ENCODE measurements at regions of chr3 and their contacts with region 1.

Region 1: GRCh38 chr3:30628901-30629590 is 22.6 kb downstream of the TGFBR2 start:
- DNase-seq: peak in 2 of 9 donors; percentile 53 to 55
- ATAC-seq: peak; percentile 51
- H3K4me3 ChIP-seq: peak overlapping the region; percentile 29
- H3K4me3 Mint-ChIP-seq: peak overlapping the region; percentile 53 to 88 (median 72)
- H3K27ac ChIP-seq: peak overlapping the region; percentile 68
- H3K27ac Mint-ChIP-seq: peak overlapping the region; percentile 84 to 98 (median 96)
- H3K4me1 ChIP-seq: peaks cover 81 to 97% of the 10 kb centered on the region in 2 donors
- H3K4me1 Mint-ChIP-seq: peaks cover 64 to 100% (median 93%) of the 10 kb centered on the region in 7 donors
- H3K27me3 ChIP-seq: no peaks in the 10 kb centered on the region
- H3K27me3 Mint-ChIP-seq: no peaks in the 10 kb centered on the region

Region 2: DNA sequence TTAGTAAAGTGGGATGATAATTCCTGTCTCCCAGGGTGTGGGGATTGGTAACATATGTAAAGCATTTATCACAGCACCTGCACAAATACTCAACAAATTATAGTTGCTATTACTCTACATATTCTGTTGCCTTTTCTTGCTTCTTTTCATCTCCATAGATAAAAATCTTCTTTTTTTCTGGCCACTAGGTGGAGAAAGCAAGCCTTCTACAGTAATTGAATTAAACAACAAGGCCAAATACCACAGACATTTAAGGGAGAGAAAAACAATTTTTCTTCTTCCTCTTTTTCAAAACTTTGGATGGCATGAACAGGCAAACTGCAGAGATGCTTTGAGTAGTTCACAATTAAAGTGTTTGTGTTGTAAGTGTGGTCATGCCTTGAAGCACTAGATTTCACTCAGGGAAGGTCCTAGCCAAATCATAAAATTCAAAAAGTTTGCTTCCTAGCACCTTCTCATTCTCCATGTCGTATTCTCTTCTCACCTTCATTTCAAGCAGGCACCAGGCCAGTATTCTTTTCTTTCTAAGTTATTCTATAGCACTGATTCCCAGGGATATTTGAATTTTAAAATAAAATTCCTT is 516.1 kb before region 1 on chr3:
- CTCF ChIA-PET with region 1: no interaction called
- POLR2A ChIA-PET with region 1: no interaction called
- intact Hi-C with region 1: loop called (anchors 2 to 5 kb)
- DNase-seq: peak in 7 of 9 donors; percentile 17 to 68 (median 55)
- ATAC-seq: peak; percentile 61
- H3K4me3 ChIP-seq: no peak overlapping the region
- H3K4me3 Mint-ChIP-seq: no peak overlapping the region
- H3K27ac ChIP-seq: no peak overlapping the region
- H3K27ac Mint-ChIP-seq: no peak overlapping the region
- H3K4me1 ChIP-seq: no peaks in the 10 kb centered on the region
- H3K4me1 Mint-ChIP-seq: peaks cover 4 to 8% (median 6%) of the 10 kb centered on the region in 7 donors
- H3K27me3 ChIP-seq: no peaks in the 10 kb centered on the region
- H3K27me3 Mint-ChIP-seq: peaks cover 0 to 16% (median 9%) of the 10 kb centered on the region in 5 donors

Region 3: GRCh38 chr3:30227571-30228301 is 401.3 kb before region 1 on chr3:
- CTCF ChIA-PET with region 1: no interaction called
- POLR2A ChIA-PET with region 1: no interaction called
- intact Hi-C with region 1: loop called in 1 of 2 experiments (anchors 10 kb)
- DNase-seq: peak in 4 of 9 donors; percentile 1 to 10 (median 6)
- ATAC-seq: peak; percentile 78
- H3K4me3 ChIP-seq: no peak overlapping the region
- H3K4me3 Mint-ChIP-seq: peak overlapping the region in 8 of 10 donors; percentile 4 to 67 (median 36)
- H3K27ac ChIP-seq: no peak overlapping the region
- H3K27ac Mint-ChIP-seq: peak overlapping the region in 6 of 9 donors; percentile 3 to 83 (median 15)
- H3K4me1 ChIP-seq: peaks cover 0 to 9% of the 10 kb centered on the region in 2 donors
- H3K4me1 Mint-ChIP-seq: peaks cover 15 to 41% (median 20%) of the 10 kb centered on the region in 7 donors
- H3K27me3 ChIP-seq: no peaks in the 10 kb centered on the region
- H3K27me3 Mint-ChIP-seq: peaks cover 0 to 8% (median 0%) of the 10 kb centered on the region in 5 donors

Region 4: GRCh38 chr3:30319713-30320112 is 309.3 kb before region 1 on chr3:
- CTCF ChIA-PET with region 1: interaction called, 9 read pairs
- POLR2A ChIA-PET with region 1: no interaction called
- intact Hi-C with region 1: loop called in 1 of 2 experiments (anchors 1 kb)
- DNase-seq: peak in 7 of 9 donors; percentile 32 to 72 (median 63)
- ATAC-seq: peak; percentile 90
- H3K4me3 ChIP-seq: no peak overlapping the region
- H3K4me3 Mint-ChIP-seq: peak overlapping the region in 4 of 10 donors; percentile 0 to 7 (median 4)
- H3K27ac ChIP-seq: no peak overlapping the region
- H3K27ac Mint-ChIP-seq: peak overlapping the region in 6 of 9 donors; percentile 1 to 60 (median 43)
- H3K4me1 ChIP-seq: peaks cover 0 to 15% of the 10 kb centered on the region in 2 donors
- H3K4me1 Mint-ChIP-seq: peaks cover 3 to 36% (median 20%) of the 10 kb centered on the region in 7 donors
- H3K27me3 ChIP-seq: no peaks in the 10 kb centered on the region
- H3K27me3 Mint-ChIP-seq: no peaks in the 10 kb centered on the region

Region 5: GRCh38 chr3:30644593-30645012 is 15.6 kb after region 1 on chr3:
- CTCF ChIA-PET with region 1: interaction called, 6 read pairs
- POLR2A ChIA-PET with region 1: interaction called, 853 read pairs
- intact Hi-C with region 1: loop called (anchors 1 kb)
- DNase-seq: peak in 7 of 9 donors; percentile 51 to 83 (median 71)
- ATAC-seq: peak; percentile 77
- H3K4me3 ChIP-seq: peak overlapping the region; percentile 23
- H3K4me3 Mint-ChIP-seq: peak overlapping the region; percentile 60 to 88 (median 77)
- H3K27ac ChIP-seq: peak overlapping the region; percentile 69
- H3K27ac Mint-ChIP-seq: peak overlapping the region; percentile 91 to 98 (median 95)
- H3K4me1 ChIP-seq: peaks cover 88 to 98% of the 10 kb centered on the region in 2 donors
- H3K4me1 Mint-ChIP-seq: peaks cover 80 to 99% (median 94%) of the 10 kb centered on the region in 7 donors
- H3K27me3 ChIP-seq: no peaks in the 10 kb centered on the region
- H3K27me3 Mint-ChIP-seq: no peaks in the 10 kb centered on the region

Region 6: DNA sequence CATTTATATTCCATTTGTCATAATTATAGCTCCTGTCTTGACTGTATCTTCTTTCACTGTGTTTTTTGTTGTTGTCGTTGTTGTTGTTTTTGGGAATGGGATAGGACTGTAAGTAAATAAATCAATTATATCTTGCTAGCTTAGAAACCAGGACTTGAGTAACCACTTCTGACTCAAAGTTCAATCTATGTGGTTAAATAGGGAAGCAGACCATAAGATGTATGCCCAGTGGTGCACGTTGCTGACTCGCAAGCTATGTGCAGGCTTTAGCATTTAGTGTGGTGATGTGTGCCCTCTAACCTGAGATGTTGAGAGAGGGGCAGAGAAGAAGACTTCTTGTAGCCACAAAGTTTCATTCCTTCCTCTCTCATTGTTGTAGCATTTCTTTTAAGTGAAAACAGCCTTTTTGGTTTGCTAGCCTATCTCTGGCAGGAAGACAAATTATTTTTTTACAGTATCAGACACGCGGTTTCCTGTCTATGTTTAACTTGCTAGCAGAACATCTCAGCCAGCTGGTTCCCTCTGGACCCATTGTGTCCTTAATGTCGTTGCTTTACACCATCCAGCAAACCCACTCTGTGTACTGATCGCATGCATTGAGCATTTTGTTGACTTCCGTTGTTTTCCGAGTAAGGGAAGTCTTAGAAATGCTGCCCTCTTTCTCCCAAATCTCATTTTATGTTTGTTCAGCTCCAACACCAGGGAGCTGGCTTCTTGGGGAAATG is 29.4 kb after region 1 on chr3:
- CTCF ChIA-PET with region 1: interaction called, 6 read pairs
- POLR2A ChIA-PET with region 1: interaction called, 853 read pairs
- intact Hi-C with region 1: loop called (anchors 1 kb)
- DNase-seq: peak in 7 of 9 donors; percentile 72 to 86 (median 84)
- ATAC-seq: peak; percentile 71
- H3K4me3 ChIP-seq: peak overlapping the region; percentile 24
- H3K4me3 Mint-ChIP-seq: peak overlapping the region; percentile 71 to 88 (median 80)
- H3K27ac ChIP-seq: peak overlapping the region; percentile 84
- H3K27ac Mint-ChIP-seq: peak overlapping the region; percentile 91 to 99 (median 97)
- H3K4me1 ChIP-seq: peaks cover 82 to 98% of the 10 kb centered on the region in 2 donors
- H3K4me1 Mint-ChIP-seq: peaks cover 67 to 100% (median 94%) of the 10 kb centered on the region in 7 donors
- H3K27me3 ChIP-seq: no peaks in the 10 kb centered on the region
- H3K27me3 Mint-ChIP-seq: no peaks in the 10 kb centered on the region

Region 7: GRCh38 chr3:30667280-30667651 is 38.2 kb after region 1 on chr3:
- CTCF ChIA-PET with region 1: interaction called, 5 read pairs
- POLR2A ChIA-PET with region 1: interaction called, 4 read pairs
- intact Hi-C with region 1: loop called in 1 of 2 experiments (anchors 5 kb)
- DNase-seq: peak in 6 of 9 donors; percentile 60 to 71 (median 66)
- ATAC-seq: peak; percentile 59
- H3K4me3 ChIP-seq: no peak overlapping the region
- H3K4me3 Mint-ChIP-seq: peak overlapping the region; percentile 16 to 88 (median 62)
- H3K27ac ChIP-seq: peak overlapping the region; percentile 72
- H3K27ac Mint-ChIP-seq: peak overlapping the region; percentile 82 to 99 (median 94)
- H3K4me1 ChIP-seq: peaks cover 46 to 95% of the 10 kb centered on the region in 2 donors
- H3K4me1 Mint-ChIP-seq: peaks cover 64 to 100% (median 99%) of the 10 kb centered on the region in 7 donors
- H3K27me3 ChIP-seq: no peaks in the 10 kb centered on the region
- H3K27me3 Mint-ChIP-seq: no peaks in the 10 kb centered on the region

Region 8: GRCh38 chr3:30915782-30916181 is 286.7 kb after region 1 on chr3:
- CTCF ChIA-PET with region 1: no interaction called
- POLR2A ChIA-PET with region 1: no interaction called
- intact Hi-C with region 1: no loop called
- DNase-seq: no peak
- ATAC-seq: no peak
- H3K4me3 ChIP-seq: no peak overlapping the region
- H3K4me3 Mint-ChIP-seq: no peak overlapping the region
- H3K27ac ChIP-seq: no peak overlapping the region
- H3K27ac Mint-ChIP-seq: no peak overlapping the region
- H3K4me1 ChIP-seq: no peaks in the 10 kb centered on the region
- H3K4me1 Mint-ChIP-seq: peaks cover 0 to 10% (median 0%) of the 10 kb centered on the region in 7 donors
- H3K27me3 ChIP-seq: no peaks in the 10 kb centered on the region
- H3K27me3 Mint-ChIP-seq: no peaks in the 10 kb centered on the region

Region 9: GRCh38 chr3:31157046-31157693 is 528.1 kb after region 1 on chr3:
- CTCF ChIA-PET with region 1: no interaction called
- POLR2A ChIA-PET with region 1: no interaction called
- intact Hi-C with region 1: no loop called
- DNase-seq: peak in 4 of 9 donors; percentile 0 to 19 (median 2)
- ATAC-seq: peak; percentile 37
- H3K4me3 ChIP-seq: peak overlapping the region; percentile 19
- H3K4me3 Mint-ChIP-seq: peak overlapping the region in 9 of 10 donors; percentile 27 to 78 (median 71)
- H3K27ac ChIP-seq: no peak overlapping the region
- H3K27ac Mint-ChIP-seq: peak overlapping the region in 8 of 9 donors; percentile 3 to 69 (median 50)
- H3K4me1 ChIP-seq: no peaks in the 10 kb centered on the region
- H3K4me1 Mint-ChIP-seq: peaks cover 9 to 13% (median 10%) of the 10 kb centered on the region in 7 donors
- H3K27me3 ChIP-seq: no peaks in the 10 kb centered on the region
- H3K27me3 Mint-ChIP-seq: no peaks in the 10 kb centered on the region

Measured in naive thymus-derived CD4-positive, alpha-beta T cell (primary cell).